ENCODE measurements at regions of chr22 and their contacts with region 1.

Region 1: GRCh38 chr22:25465949-25466348 is 98.5 kb upstream of the GRK3 start:
- H3K4me3 ChIP-seq: no peak overlapping the region
- H3K27ac ChIP-seq: no peak overlapping the region
- H3K4me1 ChIP-seq: no peaks in the 10 kb centered on the region
- CTCF ChIP-seq: no peak

Region 2: DNA sequence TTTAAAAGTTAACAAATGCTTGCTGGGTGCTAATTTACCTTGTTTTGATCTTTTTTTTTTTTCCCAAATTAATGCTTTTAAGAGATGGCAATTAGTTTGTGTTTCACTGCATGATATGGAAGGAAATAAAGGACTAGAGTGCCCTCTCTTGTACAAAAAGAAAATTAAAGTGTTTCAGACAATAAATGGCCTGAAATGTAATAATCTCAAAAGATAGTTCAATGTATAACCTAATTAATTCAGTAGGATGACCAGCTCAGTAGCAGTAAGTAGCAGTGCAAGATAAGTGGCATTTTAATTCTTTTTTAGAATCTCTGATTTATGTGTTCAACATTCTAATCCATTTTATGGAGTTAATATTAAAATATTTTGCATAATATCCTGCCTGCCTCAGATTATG is 236.1 kb after region 1 on chr22:
- CTCF ChIA-PET with region 1: interaction called, 20 read pairs
- POLR2A ChIA-PET with region 1: no interaction called
- H3K4me3 ChIP-seq: no peak overlapping the region
- H3K27ac ChIP-seq: no peak overlapping the region
- H3K4me1 ChIP-seq: no peaks in the 10 kb centered on the region
- CTCF ChIP-seq: peak; percentile 22; the same call in 1 of the 2 replicates

Region 3: GRCh38 chr22:25774575-25775026 is 308.7 kb after region 1 on chr22:
- CTCF ChIA-PET with region 1: interaction called, 56 read pairs
- POLR2A ChIA-PET with region 1: no interaction called
- H3K4me3 ChIP-seq: no peak overlapping the region
- H3K27ac ChIP-seq: no peak overlapping the region
- H3K4me1 ChIP-seq: no peaks in the 10 kb centered on the region
- CTCF ChIP-seq: peak; percentile 57

Measured in HEK293 (cell line).